HEK293 (cell line): ENCODE measurements at regions of chr19 and their contacts with region 1.

Region 1: GRCh38 chr19:44890366-44891015 is 563 bp upstream of the TOMM40 start:
- H3K4me3 ChIP-seq: peak overlapping the region; percentile 42
- H3K27ac ChIP-seq: peak overlapping the region; percentile 70
- H3K4me1 ChIP-seq: peaks cover 6% of the 10 kb centered on the region
- CTCF ChIP-seq: no peak

Region 2: DNA sequence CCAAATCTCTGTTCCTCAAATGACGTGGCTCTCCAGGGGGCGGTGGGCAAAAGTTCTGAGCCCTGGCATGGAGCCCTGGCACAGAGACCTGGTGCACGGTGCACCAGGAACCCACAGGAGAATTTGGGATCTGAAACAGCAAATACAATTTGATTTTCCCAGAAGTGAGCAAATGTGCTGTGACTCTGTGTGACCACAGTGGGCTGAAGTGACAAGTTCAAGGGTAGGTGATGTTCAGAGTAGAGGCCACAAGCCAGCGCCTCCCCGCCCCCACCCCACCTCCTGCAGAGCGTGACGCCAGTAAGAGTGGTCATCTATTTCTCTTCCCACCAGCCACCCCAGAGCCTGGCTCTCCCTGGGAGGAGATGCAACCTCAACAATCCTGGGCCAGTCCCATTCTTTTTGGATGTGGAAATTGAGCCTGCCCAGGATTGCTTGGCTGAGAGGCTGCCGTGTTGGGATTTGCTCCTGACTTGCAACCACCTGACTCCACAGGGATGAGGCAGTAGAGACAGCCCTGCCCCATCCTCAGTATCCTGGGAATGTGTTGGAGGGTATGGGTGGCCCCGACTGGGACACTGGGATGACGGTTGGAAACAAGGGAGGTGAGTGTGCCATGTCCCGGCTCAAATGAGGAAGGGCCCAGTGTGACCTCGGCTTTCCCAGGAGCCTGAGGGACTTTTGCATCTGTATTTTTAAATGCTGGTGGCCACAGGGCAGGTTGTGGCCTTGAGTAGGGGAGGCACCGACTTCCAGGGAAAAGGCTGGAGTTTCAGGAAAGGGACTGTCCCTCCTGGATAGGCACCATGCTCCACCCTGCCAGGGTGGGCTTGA is 153.0 kb before region 1 on chr19:
- CTCF ChIA-PET with region 1: no interaction called
- POLR2A ChIA-PET with region 1: no interaction called
- H3K4me3 ChIP-seq: no peak overlapping the region
- H3K27ac ChIP-seq: no peak overlapping the region
- H3K4me1 ChIP-seq: peaks cover 4% of the 10 kb centered on the region
- CTCF ChIP-seq: no peak

Region 3: DNA sequence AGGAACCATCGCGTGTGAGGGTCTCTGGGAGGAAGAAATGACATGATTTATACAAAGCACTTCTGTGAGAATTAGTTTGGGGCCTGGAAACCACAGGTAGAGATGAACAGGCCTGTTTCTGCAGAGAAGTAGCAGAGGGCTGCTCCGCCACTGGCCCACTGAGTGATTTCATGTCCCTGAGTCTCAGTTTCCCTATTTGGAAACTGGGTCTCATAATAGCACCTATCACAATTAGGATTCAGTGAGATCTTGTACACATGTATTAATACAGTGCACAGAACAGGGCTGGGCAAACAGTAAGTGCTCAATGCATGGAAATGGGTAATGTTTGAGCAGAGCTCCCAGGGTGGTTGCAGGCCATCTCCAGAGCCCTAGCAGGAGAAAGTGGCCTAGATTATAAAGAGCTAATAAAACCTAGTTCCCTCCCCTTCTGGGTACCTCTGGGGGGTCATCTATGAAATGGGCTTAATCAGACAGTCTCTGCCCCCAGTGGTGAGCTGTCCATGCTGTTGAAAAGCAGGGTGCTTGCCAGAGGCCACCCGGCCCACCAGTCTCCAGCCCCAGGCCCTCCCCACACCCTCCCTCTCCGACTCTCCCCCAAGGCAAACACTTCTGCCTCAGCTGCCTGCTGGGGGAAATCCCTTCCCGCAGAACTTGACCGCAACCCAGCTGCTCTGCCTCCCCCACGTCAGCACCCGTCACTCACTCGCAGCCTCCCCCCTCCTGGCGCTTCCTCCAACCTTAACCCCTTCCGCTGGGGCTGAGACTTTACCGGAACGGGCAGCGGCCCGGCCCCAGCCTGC is 137.5 kb before region 1 on chr19:
- CTCF ChIA-PET with region 1: no interaction called
- POLR2A ChIA-PET with region 1: no interaction called
- H3K4me3 ChIP-seq: peak overlapping the region; percentile 16; the same call in 1 of the 2 replicates
- H3K27ac ChIP-seq: no peak overlapping the region
- H3K4me1 ChIP-seq: peaks cover 19% of the 10 kb centered on the region
- CTCF ChIP-seq: 0 out of 2 replicates have a peak, but pooled peaks have one; percentile 17

Region 4: GRCh38 chr19:44856421-44857083 is 33.9 kb before region 1 on chr19:
- CTCF ChIA-PET with region 1: no interaction called
- POLR2A ChIA-PET with region 1: no interaction called
- H3K4me3 ChIP-seq: no peak overlapping the region
- H3K27ac ChIP-seq: peak overlapping the region; percentile 39; the same call in 1 of the 2 replicates
- H3K4me1 ChIP-seq: peaks cover 12% of the 10 kb centered on the region
- CTCF ChIP-seq: no peak

Region 5: GRCh38 chr19:44912854-44913253 is 22.4 kb after region 1 on chr19:
- CTCF ChIA-PET with region 1: interaction called, 7 read pairs
- POLR2A ChIA-PET with region 1: interaction called, 10 read pairs
- H3K4me3 ChIP-seq: no peak overlapping the region
- H3K27ac ChIP-seq: no peak overlapping the region
- H3K4me1 ChIP-seq: no peaks in the 10 kb centered on the region
- CTCF ChIP-seq: no peak